ENCODE measurements at regions of chr19 and their contacts with region 1.

Region 1: GRCh38 chr19:34023381-34023780 is 148.9 kb upstream of the LSM14A start:
- DNase-seq: no peak
- ATAC-seq: no peak
- H3K4me3 ChIP-seq: no peak overlapping the region
- H3K27ac ChIP-seq: no peak overlapping the region
- H3K4me1 ChIP-seq: no peaks in the 10 kb centered on the region
- H3K27me3 ChIP-seq: peaks cover 0 to 1% (median 0%) of the 10 kb centered on the region in 3 donors
- CTCF ChIP-seq: no peak

Region 2: DNA sequence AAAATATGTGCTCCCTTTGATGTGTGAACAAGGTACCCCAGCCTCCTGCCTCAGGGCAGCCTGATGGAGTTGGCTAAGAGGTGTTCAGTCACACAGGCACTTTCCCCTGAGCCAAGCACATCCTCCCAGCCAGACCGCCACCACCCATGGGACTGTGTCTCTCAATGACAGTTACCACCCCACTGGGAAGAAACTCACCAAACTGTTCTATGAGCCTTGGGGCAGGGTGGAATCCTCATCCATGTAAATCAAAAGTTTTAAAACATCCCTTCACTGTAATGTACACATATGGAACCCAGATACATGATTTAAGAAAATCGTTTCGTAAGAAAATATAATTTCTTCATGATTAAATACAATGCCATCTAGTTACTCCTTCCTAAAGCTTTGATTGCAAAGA is 10.5 kb after region 1 on chr19:
- intact Hi-C with region 1: loop called in 1 of 2 experiments (anchors 1 kb)
- DNase-seq: no peak
- ATAC-seq: no peak
- H3K4me3 ChIP-seq: no peak overlapping the region
- H3K27ac ChIP-seq: no peak overlapping the region
- H3K4me1 ChIP-seq: no peaks in the 10 kb centered on the region
- H3K27me3 ChIP-seq: peaks cover 0 to 2% (median 0%) of the 10 kb centered on the region in 3 donors
- CTCF ChIP-seq: no peak

Region 3: GRCh38 chr19:34109601-34110000 is 86.2 kb after region 1 on chr19:
- intact Hi-C with region 1: no loop called
- DNase-seq: no peak
- ATAC-seq: no peak
- H3K4me3 ChIP-seq: no peak overlapping the region
- H3K27ac ChIP-seq: no peak overlapping the region
- H3K4me1 ChIP-seq: no peaks in the 10 kb centered on the region
- H3K27me3 ChIP-seq: peaks cover 0 to 7% (median 0%) of the 10 kb centered on the region in 3 donors
- CTCF ChIP-seq: no peak

Measured in psoas muscle (tissue), 8 donors.